ENCODE measurements at regions of chr2 and their contacts with region 1.

Region 1: GRCh38 chr2:179264368-179265081 is at the start of gene SESTD1:
- DNase-seq: peak; percentile 75
- ATAC-seq: peak; percentile 65
- H3K4me3 Mint-ChIP-seq: peak within 1 kb of the TSS; percentile 80
- H3K27ac Mint-ChIP-seq: peak within 1 kb of the TSS; percentile 48
- H3K4me1 Mint-ChIP-seq: peaks cover 20% of the 10 kb centered on the region
- H3K27me3 Mint-ChIP-seq: peaks cover 20% of the 10 kb centered on the region
- total RNA-seq, gene SESTD1: 9.4 to 9.6 TPM

Region 2: DNA sequence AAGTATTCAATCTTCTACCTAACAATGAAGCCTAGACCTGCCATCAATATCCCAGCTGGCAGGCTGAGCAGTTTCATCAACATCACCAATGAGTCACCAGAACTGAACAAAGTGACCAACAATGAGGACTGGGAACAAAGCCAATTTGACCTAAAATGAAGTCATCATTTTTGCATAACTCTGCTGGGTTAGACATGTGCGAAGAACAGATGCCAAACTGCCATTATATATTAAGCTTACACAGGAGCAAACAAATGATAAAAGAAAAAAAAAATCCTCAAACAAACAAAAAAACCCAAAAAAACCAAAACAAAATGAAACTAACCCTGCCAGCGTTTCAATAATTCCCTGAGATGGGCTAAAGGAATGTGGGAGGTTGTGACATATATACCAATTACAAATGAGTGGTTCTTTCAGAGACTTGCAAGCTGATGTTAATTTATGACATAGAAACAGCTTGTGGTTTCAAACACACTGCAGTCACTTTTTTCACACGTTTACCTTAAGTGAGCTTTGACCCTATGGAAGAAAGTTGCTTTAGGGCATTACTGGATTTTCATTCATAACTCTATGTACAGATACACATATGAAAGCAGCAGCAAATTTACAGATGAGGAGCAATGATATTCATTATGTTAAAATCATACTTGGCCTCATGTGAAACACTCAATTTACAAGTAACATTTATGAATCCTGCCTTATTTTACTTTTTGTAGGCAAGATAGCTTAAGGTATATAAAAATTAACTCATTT is 157.7 kb before region 1 on chr2:
- CTCF ChIA-PET with region 1: no interaction called
- POLR2A ChIA-PET with region 1: no interaction called
- intact Hi-C with region 1: loop called in 1 of 2 experiments (anchors 5 kb)
- DNase-seq: peak; percentile 30
- ATAC-seq: peak; percentile 50
- H3K4me3 Mint-ChIP-seq: no peak overlapping the region
- H3K27ac Mint-ChIP-seq: peak overlapping the region; percentile 12
- H3K4me1 Mint-ChIP-seq: peaks cover 31% of the 10 kb centered on the region
- H3K27me3 Mint-ChIP-seq: no peaks in the 10 kb centered on the region

Region 3: DNA sequence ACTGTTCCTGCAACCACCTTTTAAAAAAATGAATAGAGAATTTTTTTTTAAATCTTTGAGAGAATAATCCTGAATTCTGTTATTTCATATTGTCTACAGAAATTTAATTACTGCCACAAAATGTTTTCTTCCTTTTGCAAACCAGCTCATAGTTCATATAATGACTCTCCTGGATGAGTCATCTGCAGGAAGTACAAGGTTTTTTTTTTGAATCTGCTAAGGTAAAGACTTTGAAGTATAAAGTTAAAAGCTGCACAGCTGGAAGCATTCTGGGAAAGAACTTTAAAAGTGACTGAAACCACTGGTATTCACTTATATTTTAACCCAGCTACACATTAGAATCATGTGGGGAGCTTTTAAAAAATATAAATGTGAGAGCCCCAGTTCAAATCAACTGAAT is 25.3 kb before region 1 on chr2:
- CTCF ChIA-PET with region 1: interaction called, 3 read pairs
- POLR2A ChIA-PET with region 1: no interaction called
- intact Hi-C with region 1: loop called in 1 of 2 experiments (anchors 2 kb)
- DNase-seq: no peak
- ATAC-seq: peak; percentile 88
- H3K4me3 Mint-ChIP-seq: no peak overlapping the region
- H3K27ac Mint-ChIP-seq: no peak overlapping the region
- H3K4me1 Mint-ChIP-seq: peaks cover 39% of the 10 kb centered on the region
- H3K27me3 Mint-ChIP-seq: peaks cover 2% of the 10 kb centered on the region

Region 4: GRCh38 chr2:179250848-179251504 is 13.5 kb before region 1 on chr2:
- CTCF ChIA-PET with region 1: interaction called, 4 read pairs
- POLR2A ChIA-PET with region 1: no interaction called
- intact Hi-C with region 1: loop called in 1 of 2 experiments (anchors 1 kb)
- DNase-seq: no peak
- ATAC-seq: no peak
- H3K4me3 Mint-ChIP-seq: no peak overlapping the region
- H3K27ac Mint-ChIP-seq: peak overlapping the region; percentile 22
- H3K4me1 Mint-ChIP-seq: peaks cover 61% of the 10 kb centered on the region
- H3K27me3 Mint-ChIP-seq: peaks cover 2% of the 10 kb centered on the region

Region 5: DNA sequence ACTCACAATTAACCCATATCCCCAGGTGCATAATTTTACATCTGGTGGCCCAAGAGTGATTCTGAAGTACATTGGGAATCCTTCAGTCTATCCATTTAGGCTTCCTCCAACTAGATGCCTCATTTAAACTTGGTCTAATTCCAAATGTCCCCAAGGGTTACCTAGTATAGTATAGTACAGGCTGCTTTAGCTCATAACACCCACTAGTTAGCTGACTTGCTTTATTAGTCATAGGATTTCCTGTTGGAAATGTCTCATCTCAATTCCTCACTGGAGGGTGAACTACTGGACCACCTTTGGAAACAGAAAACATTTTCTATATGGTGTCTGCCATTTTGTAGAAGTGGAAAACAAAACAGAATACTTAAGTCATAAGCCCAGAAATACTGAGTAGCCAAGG is 202.6 kb after region 1 on chr2:
- CTCF ChIA-PET with region 1: no interaction called
- POLR2A ChIA-PET with region 1: no interaction called
- intact Hi-C with region 1: no loop called
- DNase-seq: no peak
- ATAC-seq: no peak
- H3K4me3 Mint-ChIP-seq: no peak overlapping the region
- H3K27ac Mint-ChIP-seq: no peak overlapping the region
- H3K4me1 Mint-ChIP-seq: no peaks in the 10 kb centered on the region
- H3K27me3 Mint-ChIP-seq: peaks cover 5% of the 10 kb centered on the region

Region 6: GRCh38 chr2:180006781-180007579 is 742.5 kb after region 1 on chr2 and contains the start of gene CWC22:
- CTCF ChIA-PET with region 1: no interaction called
- POLR2A ChIA-PET with region 1: no interaction called
- intact Hi-C with region 1: loop called in 1 of 2 experiments (anchors 10 kb)
- DNase-seq: peak; percentile 91
- ATAC-seq: peak; percentile 98
- H3K4me3 Mint-ChIP-seq: peak within 1 kb of the TSS; percentile 92
- H3K27ac Mint-ChIP-seq: peak within 1 kb of the TSS; percentile 99
- H3K4me1 Mint-ChIP-seq: peaks cover 38% of the 10 kb centered on the region
- H3K27me3 Mint-ChIP-seq: no peaks in the 10 kb centered on the region
- total RNA-seq, gene CWC22: 25.3 to 31.0 TPM

Measured in activated CD4-positive, alpha-beta T cell treated with anti-CD3 and anti-CD28 coated beads for 36 hours (primary cell).